Calu3 (cell line): ENCODE measurements at regions of chr10 and their contacts with region 1.

Region 1: GRCh38 chr10:17607603-17608332 is 9.4 kb downstream of the HACD1 start:
- DNase-seq: peak; percentile 14
- H3K4me3 Mint-ChIP-seq: no peak overlapping the region
- H3K27ac Mint-ChIP-seq: no peak overlapping the region
- H3K4me1 Mint-ChIP-seq: no peaks in the 10 kb centered on the region
- H3K27me3 Mint-ChIP-seq: no peaks in the 10 kb centered on the region
- CTCF ChIP-seq: peak; percentile 37

Region 2: DNA sequence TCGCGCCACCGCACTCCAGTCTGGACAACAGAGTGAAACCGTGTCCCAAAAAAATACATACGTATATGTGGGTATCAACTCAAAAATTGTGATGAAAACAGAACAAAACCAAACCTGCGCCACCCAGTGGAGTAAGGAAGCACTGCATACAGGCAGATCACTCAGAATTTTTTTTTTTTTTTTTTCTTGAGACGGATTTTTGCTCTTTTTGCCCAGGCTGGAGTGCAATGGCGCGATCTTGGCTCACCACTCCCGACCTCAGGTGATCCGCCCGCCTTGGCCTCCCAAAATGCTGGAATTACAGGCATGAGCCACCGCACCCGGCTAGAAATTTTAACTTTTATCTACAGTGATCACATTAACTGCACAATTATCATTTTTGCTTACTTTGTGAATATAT is 135.2 kb after region 1 on chr10:
- CTCF ChIA-PET with region 1: interaction called, 3 read pairs
- intact Hi-C with region 1: loop called (anchors 1 kb)
- DNase-seq: peak; percentile 64
- H3K4me3 Mint-ChIP-seq: no peak overlapping the region
- H3K27ac Mint-ChIP-seq: no peak overlapping the region
- H3K4me1 Mint-ChIP-seq: no peaks in the 10 kb centered on the region
- H3K27me3 Mint-ChIP-seq: no peaks in the 10 kb centered on the region
- CTCF ChIP-seq: peak; percentile 67

Region 3: DNA sequence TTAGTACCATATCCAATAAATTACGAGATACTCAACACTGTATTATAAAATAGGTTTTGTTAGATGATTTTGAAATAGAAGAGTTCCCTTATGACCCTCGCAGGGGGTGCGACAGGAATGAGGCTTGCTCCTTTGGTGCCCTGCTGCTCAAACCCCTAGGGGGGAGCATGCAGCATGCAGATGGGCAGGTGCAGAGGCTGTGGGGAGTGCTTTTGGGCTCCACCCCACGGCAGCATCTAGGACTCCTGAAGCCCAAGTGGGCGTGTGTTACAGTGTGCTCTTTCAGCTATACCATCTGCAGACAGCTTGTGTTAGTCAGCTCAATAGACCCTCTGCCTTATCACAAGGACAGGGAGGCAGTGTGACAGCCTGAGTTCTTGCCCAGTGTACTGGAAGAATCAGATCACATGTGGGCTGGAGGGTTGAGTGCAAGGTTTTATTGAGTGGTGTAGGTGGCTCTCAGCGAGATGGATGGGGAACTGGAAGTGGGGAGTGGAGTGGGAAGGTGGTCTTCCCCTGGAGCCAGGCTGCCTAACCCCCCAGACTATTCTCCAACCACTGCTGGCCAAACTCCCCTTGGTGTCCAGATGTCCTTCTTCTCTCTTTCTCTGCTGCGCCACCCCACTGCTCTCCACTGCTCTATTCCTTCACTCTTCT is 198.3 kb after region 1 on chr10:
- CTCF ChIA-PET with region 1: no interaction called
- intact Hi-C with region 1: no loop called
- DNase-seq: no peak
- H3K4me3 Mint-ChIP-seq: no peak overlapping the region
- H3K27ac Mint-ChIP-seq: no peak overlapping the region
- H3K4me1 Mint-ChIP-seq: no peaks in the 10 kb centered on the region
- H3K27me3 Mint-ChIP-seq: peaks cover 16% of the 10 kb centered on the region
- CTCF ChIP-seq: no peak

Region 4: GRCh38 chr10:17872191-17873091 is 264.7 kb after region 1 on chr10:
- CTCF ChIA-PET with region 1: no interaction called
- intact Hi-C with region 1: loop called (anchors 1 kb)
- DNase-seq: no peak
- H3K4me3 Mint-ChIP-seq: no peak overlapping the region
- H3K27ac Mint-ChIP-seq: no peak overlapping the region
- H3K4me1 Mint-ChIP-seq: no peaks in the 10 kb centered on the region
- H3K27me3 Mint-ChIP-seq: peaks cover 12% of the 10 kb centered on the region
- CTCF ChIP-seq: no peak

Region 5: GRCh38 chr10:18104223-18104872 is 496.6 kb after region 1 on chr10:
- CTCF ChIA-PET with region 1: no interaction called
- intact Hi-C with region 1: loop called (anchors 2 kb)
- DNase-seq: peak; percentile 48
- H3K4me3 Mint-ChIP-seq: no peak overlapping the region
- H3K27ac Mint-ChIP-seq: no peak overlapping the region
- H3K4me1 Mint-ChIP-seq: no peaks in the 10 kb centered on the region
- H3K27me3 Mint-ChIP-seq: no peaks in the 10 kb centered on the region
- CTCF ChIP-seq: peak; percentile 51

Region 6: DNA sequence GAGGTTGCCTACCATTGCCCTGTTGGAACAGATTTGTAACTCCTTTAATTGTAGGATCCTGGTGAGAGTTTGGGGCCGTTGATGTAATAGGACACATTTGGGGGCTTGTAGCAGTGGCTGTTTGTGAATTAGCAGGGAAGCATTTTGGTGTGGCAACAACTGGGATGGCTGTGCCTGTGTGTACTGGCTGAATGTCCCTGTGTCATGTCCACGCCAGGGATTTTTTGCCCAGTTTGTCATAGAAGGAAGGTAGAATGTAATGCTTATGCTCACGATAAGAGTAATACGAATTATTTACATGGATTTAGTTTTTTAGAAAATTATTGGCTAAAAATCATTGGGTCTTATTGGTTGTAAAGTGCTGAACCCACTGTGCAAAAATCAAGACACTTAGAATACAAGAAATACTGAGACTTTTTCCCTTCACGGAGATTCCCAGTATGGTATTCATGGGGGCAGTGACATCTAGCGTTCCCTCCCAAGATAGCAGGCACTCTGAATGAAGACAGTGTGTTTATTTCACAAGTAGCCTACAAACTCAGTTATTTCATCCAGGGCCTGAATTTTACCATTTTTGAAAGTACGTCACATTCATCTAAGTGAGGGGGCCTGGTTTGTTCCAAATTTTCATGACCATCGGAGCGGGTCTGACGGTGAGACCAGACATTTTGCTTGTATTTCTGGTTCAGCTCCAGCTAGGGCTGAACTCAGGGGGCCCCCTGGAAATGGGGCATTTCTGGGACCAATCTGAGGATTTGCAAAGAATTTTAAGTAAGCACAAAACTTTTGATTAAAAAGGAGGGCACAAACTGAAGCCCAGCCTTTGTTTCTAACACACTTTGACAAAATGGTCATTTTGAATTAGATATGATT is 607.2 kb after region 1 on chr10:
- CTCF ChIA-PET with region 1: no interaction called
- intact Hi-C with region 1: loop called (anchors 5 kb)
- DNase-seq: peak; percentile 44
- H3K4me3 Mint-ChIP-seq: no peak overlapping the region
- H3K27ac Mint-ChIP-seq: no peak overlapping the region
- H3K4me1 Mint-ChIP-seq: no peaks in the 10 kb centered on the region
- H3K27me3 Mint-ChIP-seq: no peaks in the 10 kb centered on the region
- CTCF ChIP-seq: peak; percentile 57